Activated naive CD4-positive, alpha-beta T cell treated with anti-CD3 and anti-CD28 coated beads for 36 hours (primary cell): ENCODE measurements at regions of chr3 and their contacts with region 1.

Region 1: GRCh38 chr3:197906023-197906849 is 43.8 kb upstream of the RPL35A start:
- DNase-seq: peak; percentile 91
- H3K4me3 Mint-ChIP-seq: no peak overlapping the region
- H3K27ac Mint-ChIP-seq: peak overlapping the region; percentile 85
- H3K4me1 Mint-ChIP-seq: peaks cover 24% of the 10 kb centered on the region
- H3K27me3 Mint-ChIP-seq: no peaks in the 10 kb centered on the region

Region 2: DNA sequence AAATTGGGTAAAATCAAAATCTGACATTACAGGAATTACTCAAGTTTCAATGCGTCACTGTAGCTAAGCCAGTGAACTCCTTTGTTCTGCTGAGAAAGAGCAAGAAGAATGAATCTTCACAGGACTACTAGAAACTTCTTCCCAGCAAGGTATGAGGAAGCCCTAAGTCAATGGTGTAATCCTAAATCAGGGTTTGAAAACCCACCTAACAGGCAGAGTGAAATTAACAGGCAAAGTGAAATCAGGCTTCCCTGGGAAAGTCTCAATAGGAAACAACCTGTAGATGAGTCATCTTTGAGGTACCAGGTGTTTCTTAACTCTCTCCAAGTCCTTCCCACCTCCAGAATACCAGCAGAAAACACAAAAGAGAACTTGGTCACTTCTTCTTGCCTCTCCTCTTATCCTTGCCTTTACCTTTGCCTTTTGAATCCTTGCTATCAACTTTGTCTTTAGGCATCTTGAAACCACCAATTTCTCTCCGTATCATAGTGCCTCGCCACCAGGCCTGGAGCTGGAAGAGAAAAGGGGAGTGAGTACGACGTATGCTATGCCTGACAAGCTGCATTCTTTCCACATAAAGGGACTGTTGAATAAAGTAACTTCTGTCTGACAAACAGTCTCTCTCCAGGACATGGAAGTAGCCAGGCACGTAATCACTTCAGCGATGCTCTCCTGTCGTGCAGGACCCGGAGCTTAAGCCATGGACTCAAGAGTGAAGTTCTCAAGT is 16.9 kb before region 1 on chr3:
- CTCF ChIA-PET with region 1: interaction called, 7 read pairs
- intact Hi-C with region 1: loop called (anchors 2 kb)
- DNase-seq: no peak
- H3K4me3 Mint-ChIP-seq: no peak overlapping the region
- H3K27ac Mint-ChIP-seq: no peak overlapping the region
- H3K4me1 Mint-ChIP-seq: peaks cover 15% of the 10 kb centered on the region
- H3K27me3 Mint-ChIP-seq: no peaks in the 10 kb centered on the region

Region 3: GRCh38 chr3:197926418-197926817 is 20.2 kb after region 1 on chr3:
- CTCF ChIA-PET with region 1: interaction called, 5 read pairs
- intact Hi-C with region 1: loop called (anchors 1 kb)
- DNase-seq: peak; percentile 18
- H3K4me3 Mint-ChIP-seq: no peak overlapping the region
- H3K27ac Mint-ChIP-seq: no peak overlapping the region
- H3K4me1 Mint-ChIP-seq: peaks cover 4% of the 10 kb centered on the region
- H3K27me3 Mint-ChIP-seq: no peaks in the 10 kb centered on the region

Region 4: GRCh38 chr3:197942956-197943556 is 36.8 kb after region 1 on chr3:
- CTCF ChIA-PET with region 1: interaction called, 11 read pairs
- intact Hi-C with region 1: loop called (anchors 1 kb)
- DNase-seq: peak; percentile 42
- H3K4me3 Mint-ChIP-seq: no peak overlapping the region
- H3K27ac Mint-ChIP-seq: no peak overlapping the region
- H3K4me1 Mint-ChIP-seq: no peaks in the 10 kb centered on the region
- H3K27me3 Mint-ChIP-seq: no peaks in the 10 kb centered on the region

Region 5: DNA sequence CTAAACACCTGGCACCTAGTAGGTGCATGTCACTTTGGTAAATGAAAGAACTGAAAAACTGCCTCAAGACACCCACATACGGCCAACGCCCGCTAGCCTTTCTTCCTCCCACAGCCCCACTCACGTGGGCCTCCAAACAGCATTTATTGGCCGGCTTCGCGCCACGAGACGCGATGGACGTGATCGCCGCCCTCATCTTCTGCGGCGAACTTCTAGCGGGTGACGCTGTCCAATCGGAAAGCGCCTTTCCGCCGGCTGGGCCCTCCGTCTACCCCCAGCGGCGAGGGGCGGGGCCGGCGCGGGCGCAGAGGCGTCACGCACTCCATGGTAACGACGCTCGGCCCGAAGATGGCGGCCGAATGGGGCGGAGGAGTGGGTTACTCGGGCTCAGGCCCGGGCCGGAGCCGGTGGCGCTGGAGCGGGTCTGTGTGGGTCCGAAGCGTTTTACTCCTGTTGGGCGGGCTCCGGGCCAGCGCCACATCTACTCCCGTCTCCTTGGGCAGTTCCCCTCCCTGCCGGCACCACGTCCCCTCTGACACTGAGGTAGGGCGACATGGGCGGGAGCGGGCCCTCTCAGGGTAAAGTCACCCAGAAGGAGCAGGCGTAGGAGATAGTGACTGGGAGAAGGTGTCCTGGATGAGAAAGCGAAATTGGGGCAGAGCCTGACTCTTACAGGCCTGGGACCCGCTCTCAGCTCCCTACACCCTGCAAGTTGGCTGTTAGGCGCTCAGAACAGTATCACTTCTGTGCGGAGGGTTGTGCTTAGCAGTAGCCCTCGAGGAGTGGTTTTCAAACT is 53.9 kb after region 1 on chr3 and contains the start of gene LMLN:
- CTCF ChIA-PET with region 1: interaction called, 11 read pairs
- intact Hi-C with region 1: loop called (anchors 1 kb)
- DNase-seq: peak; percentile 95
- H3K4me3 Mint-ChIP-seq: peak within 1 kb of the TSS; percentile 85
- H3K27ac Mint-ChIP-seq: peak within 1 kb of the TSS; percentile 88
- H3K4me1 Mint-ChIP-seq: peaks cover 43% of the 10 kb centered on the region
- H3K27me3 Mint-ChIP-seq: no peaks in the 10 kb centered on the region
- total RNA-seq, gene LMLN: 2.1 to 2.2 TPM

Region 6: DNA sequence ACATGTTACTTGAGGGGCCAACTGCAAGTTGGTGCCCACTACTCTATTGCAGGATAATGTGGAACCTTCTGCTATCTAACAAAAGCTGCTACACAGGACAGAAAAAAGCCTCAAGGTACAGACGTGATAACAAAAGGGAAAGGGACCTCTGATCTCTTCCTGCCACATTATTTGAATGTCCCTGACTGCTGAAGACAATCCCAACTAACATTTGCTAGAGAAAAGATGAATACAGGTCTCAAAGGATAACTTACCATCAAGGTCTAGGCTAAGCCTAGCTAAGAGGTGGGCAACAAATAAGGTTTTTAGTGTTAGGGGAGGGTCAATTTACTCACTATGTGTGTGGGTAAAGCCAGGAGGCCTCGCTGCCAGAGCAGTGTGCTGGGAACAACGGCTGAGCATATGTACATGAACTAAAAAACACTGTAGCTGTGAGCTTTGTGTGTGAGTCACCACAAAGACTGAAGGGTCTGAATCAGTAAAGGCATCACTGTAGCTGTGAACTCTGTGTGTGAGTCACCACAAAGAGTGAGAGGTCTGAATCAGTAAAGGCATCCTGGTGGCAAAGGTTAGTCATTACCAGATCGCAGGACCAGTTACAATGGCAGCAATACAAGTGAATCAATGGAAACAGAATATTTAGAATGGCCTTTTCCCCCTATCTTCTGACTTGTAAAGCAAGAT is 165.5 kb after region 1 on chr3:
- CTCF ChIA-PET with region 1: no interaction called
- intact Hi-C with region 1: loop called (anchors 1 kb)
- DNase-seq: peak; percentile 80
- H3K4me3 Mint-ChIP-seq: peak overlapping the region; percentile 11
- H3K27ac Mint-ChIP-seq: peak overlapping the region; percentile 88
- H3K4me1 Mint-ChIP-seq: peaks cover 33% of the 10 kb centered on the region
- H3K27me3 Mint-ChIP-seq: peaks cover 6% of the 10 kb centered on the region

Region 7: DNA sequence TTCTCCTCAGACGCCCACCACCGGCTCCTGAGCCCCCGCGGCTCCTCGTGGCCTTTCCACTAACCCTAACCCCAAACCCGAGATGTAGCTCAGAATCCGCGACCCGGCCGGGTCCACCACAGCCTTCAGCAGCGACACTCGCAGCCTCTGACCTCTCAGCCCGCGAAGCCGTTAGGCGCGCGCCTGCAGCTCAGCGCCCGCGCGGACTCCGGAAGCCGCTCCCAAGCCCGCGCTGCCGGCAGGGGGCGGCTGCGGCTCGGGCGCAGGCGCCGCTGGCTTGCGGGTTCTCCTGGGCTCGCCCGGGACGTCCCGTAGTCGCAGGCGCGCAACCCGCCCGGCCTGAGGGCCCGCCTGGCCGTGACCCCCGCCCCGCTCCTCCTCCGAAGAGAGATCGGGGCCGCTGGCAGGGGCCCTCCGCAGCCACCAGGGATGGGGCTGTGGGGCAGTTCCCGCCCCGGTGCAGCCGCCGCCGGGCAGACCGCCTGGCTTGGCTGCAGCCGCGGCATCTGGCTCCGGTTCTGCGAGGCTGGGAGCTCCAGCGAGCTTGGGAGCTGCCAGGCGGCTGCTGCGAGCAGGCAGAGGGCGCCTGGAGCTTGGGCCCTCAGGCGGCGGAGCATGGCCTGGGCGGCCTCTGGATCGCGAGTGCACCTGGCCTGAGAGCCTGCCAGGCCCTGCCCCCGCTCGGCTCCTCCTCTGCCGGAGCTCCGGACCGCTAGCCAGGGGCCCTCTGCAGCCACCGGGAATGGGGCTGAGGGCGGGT is 174.5 kb after region 1 on chr3:
- CTCF ChIA-PET with region 1: interaction called, 8 read pairs
- intact Hi-C with region 1: loop called (anchors 1 kb)
- DNase-seq: peak; percentile 81
- H3K4me3 Mint-ChIP-seq: peak overlapping the region; percentile 88
- H3K27ac Mint-ChIP-seq: peak overlapping the region; percentile 86
- H3K4me1 Mint-ChIP-seq: peaks cover 19% of the 10 kb centered on the region
- H3K27me3 Mint-ChIP-seq: peaks cover 37% of the 10 kb centered on the region